ENCODE measurements at regions of chr9 and their contacts with region 1.

Region 1: GRCh38 chr9:126781186-126782052 is 23.4 kb upstream of the ZBTB43 start:
- DNase-seq: peak; percentile 86
- ATAC-seq: peak; percentile 89
- H3K4me3 Mint-ChIP-seq: no peak overlapping the region
- H3K27ac Mint-ChIP-seq: no peak overlapping the region
- H3K4me1 Mint-ChIP-seq: peaks cover 4% of the 10 kb centered on the region
- H3K27me3 Mint-ChIP-seq: peaks cover 5% of the 10 kb centered on the region

Region 2: GRCh38 chr9:126411225-126411947 is 370.0 kb before region 1 on chr9:
- CTCF ChIA-PET with region 1: no interaction called
- POLR2A ChIA-PET with region 1: no interaction called
- DNase-seq: peak; percentile 78
- ATAC-seq: peak; percentile 84
- H3K4me3 Mint-ChIP-seq: peak overlapping the region; percentile 71
- H3K27ac Mint-ChIP-seq: peak overlapping the region; percentile 97
- H3K4me1 Mint-ChIP-seq: peaks cover 58% of the 10 kb centered on the region
- H3K27me3 Mint-ChIP-seq: no peaks in the 10 kb centered on the region

Region 3: GRCh38 chr9:126587187-126588185 is 193.9 kb before region 1 on chr9:
- CTCF ChIA-PET with region 1: no interaction called
- POLR2A ChIA-PET with region 1: no interaction called
- DNase-seq: no peak
- ATAC-seq: no peak
- H3K4me3 Mint-ChIP-seq: no peak overlapping the region
- H3K27ac Mint-ChIP-seq: no peak overlapping the region
- H3K4me1 Mint-ChIP-seq: no peaks in the 10 kb centered on the region
- H3K27me3 Mint-ChIP-seq: peaks cover 15% of the 10 kb centered on the region

Region 4: GRCh38 chr9:126690431-126691350 is 90.7 kb before region 1 on chr9:
- CTCF ChIA-PET with region 1: interaction called, 24 read pairs
- POLR2A ChIA-PET with region 1: no interaction called
- DNase-seq: peak; percentile 75
- ATAC-seq: peak; percentile 80
- H3K4me3 Mint-ChIP-seq: no peak overlapping the region
- H3K27ac Mint-ChIP-seq: no peak overlapping the region
- H3K4me1 Mint-ChIP-seq: no peaks in the 10 kb centered on the region
- H3K27me3 Mint-ChIP-seq: peaks cover 12% of the 10 kb centered on the region

Region 5: GRCh38 chr9:126745574-126746411 is 35.6 kb before region 1 on chr9:
- CTCF ChIA-PET with region 1: interaction called, 15 read pairs
- POLR2A ChIA-PET with region 1: no interaction called
- DNase-seq: peak; percentile 35
- ATAC-seq: peak; percentile 24
- H3K4me3 Mint-ChIP-seq: peak overlapping the region; percentile 50
- H3K27ac Mint-ChIP-seq: peak overlapping the region; percentile 82
- H3K4me1 Mint-ChIP-seq: peaks cover 42% of the 10 kb centered on the region
- H3K27me3 Mint-ChIP-seq: peaks cover 1% of the 10 kb centered on the region

Region 6: DNA sequence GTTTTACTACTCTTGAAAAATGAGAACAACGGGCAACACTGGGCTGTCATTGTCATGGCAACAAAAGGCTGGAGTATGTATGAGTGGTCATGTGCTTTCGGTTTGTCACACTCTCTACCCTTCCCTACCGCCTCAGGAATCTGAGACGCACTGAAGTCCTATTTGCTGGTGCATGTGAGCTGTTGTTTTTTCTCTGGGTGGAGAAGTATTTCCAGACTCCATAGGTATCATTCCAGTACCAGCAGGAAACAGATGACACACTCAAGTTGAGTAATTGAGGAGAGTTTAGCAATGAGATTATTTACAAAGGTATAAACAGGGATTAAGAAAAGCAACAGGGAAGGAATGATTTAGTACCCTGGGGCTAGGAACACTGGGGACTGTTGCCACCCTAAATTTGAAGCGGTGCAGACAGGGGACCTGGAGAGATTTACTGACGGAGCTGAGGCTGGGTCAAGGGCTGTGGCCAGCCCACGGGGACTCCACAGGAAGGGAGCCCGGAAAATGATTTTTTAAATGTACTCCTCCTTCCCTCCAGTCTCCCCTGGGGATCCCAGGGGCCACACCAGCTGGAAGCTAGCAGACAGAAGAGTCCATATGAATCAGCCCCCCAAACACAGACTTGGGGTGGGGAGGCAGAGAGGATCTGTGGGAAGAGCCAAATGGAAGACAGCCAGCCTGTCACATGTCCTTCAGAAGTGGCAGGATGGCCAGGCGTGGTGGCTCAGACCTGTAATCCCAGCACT is 10.2 kb after region 1 on chr9:
- CTCF ChIA-PET with region 1: interaction called, 10 read pairs
- POLR2A ChIA-PET with region 1: interaction called, 4 read pairs
- DNase-seq: no peak
- ATAC-seq: no peak
- H3K4me3 Mint-ChIP-seq: no peak overlapping the region
- H3K27ac Mint-ChIP-seq: no peak overlapping the region
- H3K4me1 Mint-ChIP-seq: no peaks in the 10 kb centered on the region
- H3K27me3 Mint-ChIP-seq: peaks cover 51% of the 10 kb centered on the region

Region 7: DNA sequence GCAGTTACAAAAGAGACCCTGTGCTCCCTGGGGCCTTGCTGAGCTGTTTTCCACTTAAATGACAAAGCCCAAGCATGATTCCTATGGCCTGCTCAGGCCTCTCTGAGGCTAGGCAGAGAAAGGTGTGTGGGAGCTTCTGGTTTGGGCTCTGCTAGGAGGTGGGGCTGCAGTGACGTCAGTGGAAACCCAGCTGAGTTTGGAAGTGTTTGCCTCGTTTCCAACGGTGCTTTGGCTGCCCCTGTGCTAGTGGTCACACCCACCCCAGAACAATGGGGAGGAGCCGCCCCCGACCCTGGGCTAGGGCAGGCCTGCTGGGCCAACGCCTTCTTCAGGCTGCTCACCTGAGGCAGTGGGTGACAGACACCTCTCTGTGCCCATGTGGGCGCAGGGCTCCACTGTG is 330.6 kb after region 1 on chr9:
- CTCF ChIA-PET with region 1: no interaction called
- POLR2A ChIA-PET with region 1: no interaction called
- DNase-seq: no peak
- ATAC-seq: no peak
- H3K4me3 Mint-ChIP-seq: no peak overlapping the region
- H3K27ac Mint-ChIP-seq: no peak overlapping the region
- H3K4me1 Mint-ChIP-seq: peaks cover 18% of the 10 kb centered on the region
- H3K27me3 Mint-ChIP-seq: peaks cover 2% of the 10 kb centered on the region

Region 8: GRCh38 chr9:127144670-127145445 is 363.4 kb after region 1 on chr9:
- CTCF ChIA-PET with region 1: no interaction called
- POLR2A ChIA-PET with region 1: no interaction called
- DNase-seq: no peak
- ATAC-seq: no peak
- H3K4me3 Mint-ChIP-seq: no peak overlapping the region
- H3K27ac Mint-ChIP-seq: no peak overlapping the region
- H3K4me1 Mint-ChIP-seq: no peaks in the 10 kb centered on the region
- H3K27me3 Mint-ChIP-seq: peaks cover 11% of the 10 kb centered on the region

Measured in activated CD8-positive, alpha-beta T cell treated with anti-CD3 and anti-CD28 coated beads, Interleukin-2, amount 10 ng/mL, durations not matched to agents 7 days and 5 days (primary cell).